ENCODE measurements at regions of chr16 and their contacts with region 1.

Region 1: GRCh38 chr16:20849587-20850390 is 43.5 kb downstream of the REXO5 start:
- DNase-seq: peak; percentile 78
- H3K4me3 Mint-ChIP-seq: no peak overlapping the region
- H3K27ac Mint-ChIP-seq: no peak overlapping the region
- H3K4me1 Mint-ChIP-seq: peaks cover 8% of the 10 kb centered on the region
- H3K27me3 Mint-ChIP-seq: no peaks in the 10 kb centered on the region

Region 2: GRCh38 chr16:20938426-20938825 is 88.6 kb after region 1 on chr16:
- CTCF ChIA-PET with region 1: interaction called, 10 read pairs
- intact Hi-C with region 1: no loop called
- DNase-seq: peak; percentile 46
- H3K4me3 Mint-ChIP-seq: no peak overlapping the region
- H3K27ac Mint-ChIP-seq: no peak overlapping the region
- H3K4me1 Mint-ChIP-seq: peaks cover 28% of the 10 kb centered on the region
- H3K27me3 Mint-ChIP-seq: no peaks in the 10 kb centered on the region

Region 3: GRCh38 chr16:21001262-21001661 is 151.5 kb after region 1 on chr16:
- CTCF ChIA-PET with region 1: interaction called, 13 read pairs
- intact Hi-C with region 1: loop called (anchors 1 kb)
- DNase-seq: peak; percentile 55
- H3K4me3 Mint-ChIP-seq: no peak overlapping the region
- H3K27ac Mint-ChIP-seq: no peak overlapping the region
- H3K4me1 Mint-ChIP-seq: no peaks in the 10 kb centered on the region
- H3K27me3 Mint-ChIP-seq: no peaks in the 10 kb centered on the region

Region 4: GRCh38 chr16:21100447-21100846 is 250.7 kb after region 1 on chr16:
- CTCF ChIA-PET with region 1: interaction called, 10 read pairs
- intact Hi-C with region 1: no loop called
- DNase-seq: no peak
- H3K4me3 Mint-ChIP-seq: no peak overlapping the region
- H3K27ac Mint-ChIP-seq: no peak overlapping the region
- H3K4me1 Mint-ChIP-seq: no peaks in the 10 kb centered on the region
- H3K27me3 Mint-ChIP-seq: peaks cover 7% of the 10 kb centered on the region